ENCODE measurements at regions of chr15 and their contacts with region 1.

Region 1: GRCh38 chr15:82709421-82710207 is at the start of gene AP3B2:
- DNase-seq: peak; percentile 49
- ATAC-seq: peak; percentile 98
- H3K4me3 ChIP-seq: peak within 1 kb of the TSS; percentile 48
- H3K27ac ChIP-seq: no peak within 1 kb of the TSS
- H3K4me1 ChIP-seq: peaks cover 2% of the 10 kb centered on the region; the same call in 1 of the 2 replicates
- H3K27me3 ChIP-seq: 0 out of 2 replicates have a peak, but pooled peaks cover 2% of the 10 kb centered on the region
- CTCF ChIP-seq: no peak
- POLR2A ChIP-seq: no peak
- RAD21 ChIP-seq: no peak
- total RNA-seq, gene AP3B2: not detected in 2 replicates

Region 2: DNA sequence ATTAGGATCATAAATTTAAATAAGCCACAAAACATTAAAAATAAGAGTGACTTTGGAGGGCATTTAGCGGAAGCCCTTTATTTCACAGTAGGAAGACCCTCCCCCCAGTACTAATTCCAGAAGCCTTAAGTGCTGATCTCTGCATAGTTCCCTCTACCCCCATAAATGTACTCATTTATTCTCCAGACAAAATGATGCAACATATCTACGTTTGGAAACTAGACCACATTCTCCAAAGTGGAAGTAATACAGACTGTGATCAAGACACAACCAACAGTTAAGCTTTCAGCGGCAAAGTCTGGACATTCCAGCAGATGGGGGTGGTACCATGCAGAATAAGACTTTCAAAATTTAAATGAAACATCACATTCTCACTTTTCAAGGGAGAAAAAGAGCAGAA is 124.5 kb before region 1 on chr15:
- CTCF ChIA-PET with region 1: no interaction called
- POLR2A ChIA-PET with region 1: no interaction called
- dilution Hi-C with region 1: no loop called
- in situ Hi-C with region 1: no loop called
- intact Hi-C with region 1: loop called (anchors 10 kb)
- DNase-seq: peak; percentile 45
- ATAC-seq: peak; percentile 35; the same call in 1 of the 2 replicates
- H3K4me3 ChIP-seq: no peak overlapping the region
- H3K27ac ChIP-seq: no peak overlapping the region
- H3K4me1 ChIP-seq: no peaks in the 10 kb centered on the region
- H3K27me3 ChIP-seq: peaks cover 10% of the 10 kb centered on the region
- CTCF ChIP-seq: peak; percentile 30; the same call in 1 of the 2 replicates
- POLR2A ChIP-seq: no peak
- RAD21 ChIP-seq: peak; percentile 31; the same call in 1 of the 2 replicates

Region 3: DNA sequence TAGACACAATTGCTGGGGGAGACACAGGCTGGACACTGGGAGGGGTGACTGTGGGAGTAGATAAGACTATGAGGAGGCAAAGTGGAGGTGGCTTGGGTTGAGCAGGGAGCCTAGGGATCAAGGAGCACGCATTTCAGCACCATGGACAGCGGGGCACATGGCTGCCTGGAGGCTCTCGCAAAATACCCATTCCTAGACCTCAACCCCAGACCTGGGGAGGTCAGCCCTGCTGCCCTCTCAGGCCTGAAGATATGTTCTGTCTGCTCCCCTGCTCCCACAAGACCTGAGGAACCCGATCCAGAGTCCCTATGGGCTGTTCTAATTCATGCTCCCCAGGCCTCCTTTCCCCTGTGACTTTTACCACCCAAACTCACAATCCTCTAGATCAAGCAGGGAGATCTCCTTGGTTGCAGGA is 46.4 kb before region 1 on chr15:
- CTCF ChIA-PET with region 1: no interaction called
- POLR2A ChIA-PET with region 1: no interaction called
- dilution Hi-C with region 1: no loop called
- in situ Hi-C with region 1: no loop called
- intact Hi-C with region 1: loop called (anchors 5 kb)
- DNase-seq: peak; percentile 31
- ATAC-seq: peak; percentile 63; the same call in 1 of the 2 replicates
- H3K4me3 ChIP-seq: no peak overlapping the region
- H3K27ac ChIP-seq: no peak overlapping the region
- H3K4me1 ChIP-seq: no peaks in the 10 kb centered on the region
- H3K27me3 ChIP-seq: no peaks in the 10 kb centered on the region
- CTCF ChIP-seq: no peak
- POLR2A ChIP-seq: no peak
- RAD21 ChIP-seq: no peak